Heart left ventricle (tissue), 16 donors: ENCODE measurements at regions of chr12 and their contacts with region 1.

Region 1: GRCh38 chr12:116703214-116703795 is 34.6 kb downstream of the SPRING1 start:
- DNase-seq: peak; percentile 54 to 74 (median 66)
- ATAC-seq: peak; percentile 67 to 83 (median 76)
- H3K4me3 ChIP-seq: no peak overlapping the region
- H3K27ac ChIP-seq: no peak overlapping the region
- H3K4me1 ChIP-seq: peaks cover 0 to 6% (median 0%) of the 10 kb centered on the region in 12 donors
- H3K27me3 ChIP-seq: no peaks in the 10 kb centered on the region
- CTCF ChIP-seq: peak; percentile 89 to 97 (median 93)
- POLR2A ChIP-seq: no peak

Region 2: DNA sequence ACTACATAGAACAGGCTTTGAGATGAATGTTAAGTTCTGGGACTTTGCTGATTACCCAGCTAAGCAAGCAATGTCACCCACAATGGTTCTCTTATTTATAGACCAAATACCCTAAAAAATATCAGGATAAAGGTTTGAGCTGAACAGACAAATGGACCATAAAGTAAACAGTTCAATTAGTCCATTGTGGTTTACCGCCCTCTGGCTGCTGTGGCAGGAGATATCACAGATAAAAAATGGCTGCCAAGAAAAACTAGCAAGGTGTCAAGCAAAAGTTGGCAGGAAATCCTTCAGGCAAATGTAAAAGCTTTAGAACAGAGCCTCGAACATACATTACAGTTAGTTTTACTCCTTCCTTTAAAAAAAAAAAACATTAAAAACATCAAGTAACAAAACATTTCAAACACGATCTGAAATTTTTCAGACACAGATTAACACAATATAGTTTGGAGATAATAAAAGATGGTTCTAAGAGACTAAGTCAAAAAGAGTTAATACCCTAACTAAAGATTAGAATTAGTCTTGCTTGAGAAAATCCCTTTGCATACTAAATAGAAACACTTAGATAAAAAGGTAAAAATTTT is 467.1 kb before region 1 on chr12:
- intact Hi-C with region 1: loop called in 1 of 10 experiments (anchors 10 kb)
- DNase-seq: peak in 4 of 5 donors; percentile 42 to 50 (median 46)
- ATAC-seq: peak; percentile 25 to 84 (median 64)
- H3K4me3 ChIP-seq: no peak overlapping the region
- H3K27ac ChIP-seq: peak overlapping the region in 3 of 12 donors; percentile 14 to 18 (median 15)
- H3K4me1 ChIP-seq: peaks cover 0 to 60% (median 37%) of the 10 kb centered on the region in 12 donors
- H3K27me3 ChIP-seq: no peaks in the 10 kb centered on the region
- CTCF ChIP-seq: peak; percentile 54 to 85 (median 74)
- POLR2A ChIP-seq: no peak

Region 3: DNA sequence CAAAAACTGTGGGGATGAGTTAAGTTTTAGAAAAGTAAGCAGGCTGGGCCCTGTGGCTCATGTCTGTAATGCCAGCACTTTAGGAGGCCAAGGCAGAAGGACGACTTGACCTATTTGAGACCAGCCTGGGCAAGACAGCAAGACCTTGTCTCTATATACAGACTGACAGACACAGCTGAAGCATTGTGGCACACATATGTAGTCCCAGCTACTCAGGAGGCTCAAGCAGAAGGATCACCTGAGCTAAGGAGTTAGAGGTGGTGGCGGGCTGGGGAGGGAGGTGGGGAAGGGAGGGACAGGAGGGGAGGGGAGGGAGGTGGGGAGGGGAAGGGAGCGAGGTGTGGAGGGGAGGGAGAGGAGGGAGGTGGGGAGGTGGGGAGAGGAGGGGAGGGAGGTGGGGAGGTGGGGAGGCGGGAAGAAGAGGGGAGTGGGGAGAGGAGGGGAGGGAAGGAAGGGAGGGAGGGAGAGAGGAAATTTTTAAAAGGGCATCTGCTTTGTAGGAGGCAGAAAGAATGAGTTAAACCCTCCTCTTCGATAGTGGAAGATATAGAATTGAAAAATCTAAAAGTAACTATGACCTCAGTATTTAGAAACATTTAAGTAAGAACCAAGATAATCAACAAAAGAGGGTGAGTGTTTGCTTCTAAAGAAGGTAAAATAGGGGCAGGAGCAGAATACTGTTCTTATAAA is 456.7 kb before region 1 on chr12:
- intact Hi-C with region 1: no loop called
- DNase-seq: no peak
- ATAC-seq: no peak
- H3K4me3 ChIP-seq: no peak overlapping the region
- H3K27ac ChIP-seq: peak overlapping the region in 1 of 12 donors; percentile 50
- H3K4me1 ChIP-seq: peaks cover 13 to 75% (median 59%) of the 10 kb centered on the region in 12 donors
- H3K27me3 ChIP-seq: no peaks in the 10 kb centered on the region
- CTCF ChIP-seq: no peak
- POLR2A ChIP-seq: no peak

Region 4: DNA sequence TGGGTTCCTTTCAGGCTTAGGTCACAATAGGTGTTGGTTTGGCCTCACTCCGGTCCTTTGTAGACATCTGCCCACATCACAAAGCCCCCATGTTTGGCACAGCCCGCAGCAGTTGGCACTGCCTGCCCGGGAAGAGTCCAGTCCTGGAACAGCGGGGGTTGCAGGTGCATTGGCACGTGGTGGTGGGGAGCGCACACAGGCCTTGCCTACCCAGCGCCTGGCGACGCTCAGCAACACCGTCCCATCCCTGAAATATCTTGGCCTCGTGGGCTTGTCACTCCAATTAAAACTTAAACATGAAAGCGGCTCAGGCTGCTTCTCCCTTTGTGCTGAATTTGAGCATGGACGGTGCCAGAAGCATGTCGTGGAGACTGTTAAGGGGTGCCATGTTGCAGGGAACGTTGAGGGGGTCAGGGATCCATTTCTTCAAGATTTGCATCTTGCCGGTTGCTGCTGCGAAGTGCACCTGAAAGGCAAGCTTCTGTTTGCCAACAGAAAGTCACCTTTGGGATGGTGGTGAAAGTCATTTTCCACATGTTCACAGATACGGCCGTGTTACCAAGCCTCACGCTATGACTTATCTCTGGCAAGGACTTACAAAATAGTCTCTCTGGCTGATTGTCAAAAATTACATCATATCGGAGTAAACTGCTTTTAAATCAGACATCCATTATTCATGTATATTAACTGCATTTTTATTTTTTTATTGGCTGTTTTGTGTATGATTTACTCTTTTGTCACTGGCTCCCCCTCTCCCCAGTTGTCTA is 298.9 kb after region 1 on chr12:
- intact Hi-C with region 1: loop called in 1 of 10 experiments (anchors 10 kb)
- DNase-seq: no peak
- ATAC-seq: peak in 3 of 4 donors; percentile 50 to 60 (median 57)
- H3K4me3 ChIP-seq: no peak overlapping the region
- H3K27ac ChIP-seq: peak overlapping the region in 6 of 12 donors; percentile 9 to 71 (median 33)
- H3K4me1 ChIP-seq: peaks cover 0 to 31% (median 6%) of the 10 kb centered on the region in 12 donors
- H3K27me3 ChIP-seq: no peaks in the 10 kb centered on the region
- CTCF ChIP-seq: no peak
- POLR2A ChIP-seq: no peak

Region 5: DNA sequence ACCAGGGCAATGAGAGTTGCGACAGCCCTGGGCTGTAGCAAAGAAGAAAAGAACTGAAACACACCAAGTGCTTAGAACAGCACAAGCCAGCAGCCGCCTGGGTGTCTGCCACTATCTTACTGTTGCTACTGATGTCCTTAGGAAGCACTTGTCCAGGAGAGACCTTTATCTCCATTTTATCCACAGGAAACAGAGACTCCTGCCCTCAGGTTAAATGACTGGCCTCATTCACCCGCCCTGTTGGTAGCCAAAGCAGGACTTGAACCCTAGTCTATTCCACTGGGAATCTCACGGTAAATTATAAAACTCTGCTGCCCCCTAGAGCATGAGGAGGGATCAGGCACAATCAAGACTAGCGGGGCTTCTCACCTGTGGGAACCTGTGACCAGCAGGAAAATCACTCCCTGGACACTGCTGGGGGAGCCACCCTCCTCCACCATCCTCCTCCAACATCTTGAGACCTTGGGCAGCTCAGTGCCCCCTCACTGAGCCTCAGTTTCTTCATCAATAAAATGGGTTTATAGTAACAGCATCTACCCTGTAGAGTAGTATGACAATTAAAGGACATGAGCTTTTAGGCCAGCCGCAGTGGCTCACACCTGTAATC is 416.4 kb after region 1 on chr12:
- intact Hi-C with region 1: loop called in 4 of 10 experiments (anchors 10 kb)
- DNase-seq: no peak
- ATAC-seq: peak; percentile 29 to 40 (median 38)
- H3K4me3 ChIP-seq: no peak overlapping the region
- H3K27ac ChIP-seq: peak overlapping the region in 9 of 12 donors; percentile 13 to 68 (median 33)
- H3K4me1 ChIP-seq: peaks cover 12 to 44% (median 24%) of the 10 kb centered on the region in 12 donors
- H3K27me3 ChIP-seq: no peaks in the 10 kb centered on the region
- CTCF ChIP-seq: peak; percentile 57 to 71 (median 63)
- POLR2A ChIP-seq: no peak